PC-3 (cell line): ENCODE measurements at regions of chr12 and their contacts with region 1.

Region 1: DNA sequence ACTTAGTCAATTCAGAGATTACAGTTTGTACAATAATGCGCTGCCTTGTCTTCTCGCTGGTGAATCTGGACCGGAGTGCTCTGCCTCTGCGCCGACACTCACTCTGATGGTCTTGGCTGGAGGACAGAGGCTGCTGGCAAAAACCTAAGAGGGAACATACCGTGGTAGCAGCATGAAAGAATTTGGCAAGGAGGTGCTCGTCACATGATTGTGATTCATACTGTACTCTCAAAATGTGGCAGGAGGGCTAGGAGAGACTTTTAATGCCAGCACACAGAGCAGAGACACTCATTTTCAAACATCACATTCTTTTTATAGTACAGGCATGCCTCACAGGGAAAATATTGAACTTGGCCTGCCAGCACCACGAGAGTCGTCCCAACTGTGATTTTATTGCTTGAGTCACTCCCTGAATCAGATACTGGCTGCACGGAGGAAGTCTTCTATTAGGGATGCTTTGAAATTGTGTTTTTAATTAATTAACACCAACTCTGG is 67.8 kb downstream of the HMGA2 start:
- DNase-seq: peak; percentile 97
- ATAC-seq: peak; percentile 74
- H3K4me3 ChIP-seq: peak overlapping the region; percentile 36; the same call in 1 of the 2 replicates
- H3K27ac ChIP-seq: peak overlapping the region; percentile 95
- H3K4me1 ChIP-seq: peaks cover 81% of the 10 kb centered on the region
- H3K27me3 ChIP-seq: no peaks in the 10 kb centered on the region
- CTCF ChIP-seq: no peak

Region 2: GRCh38 chr12:65740873-65741600 is 151.0 kb before region 1 on chr12:
- CTCF ChIA-PET with region 1: no interaction called
- POLR2A ChIA-PET with region 1: no interaction called
- intact Hi-C with region 1: no loop called
- DNase-seq: peak; percentile 42
- ATAC-seq: peak; percentile 80
- H3K4me3 ChIP-seq: peak overlapping the region; percentile 34; the same call in 1 of the 2 replicates
- H3K27ac ChIP-seq: no peak overlapping the region
- H3K4me1 ChIP-seq: 0 out of 2 replicates have a peak, but pooled peaks cover 2% of the 10 kb centered on the region
- H3K27me3 ChIP-seq: no peaks in the 10 kb centered on the region
- CTCF ChIP-seq: no peak

Region 3: GRCh38 chr12:65948320-65949008 is 56.4 kb after region 1 on chr12:
- CTCF ChIA-PET with region 1: no interaction called
- POLR2A ChIA-PET with region 1: no interaction called
- intact Hi-C with region 1: loop called (anchors 1 kb)
- DNase-seq: peak; percentile 98
- ATAC-seq: peak; percentile 60
- H3K4me3 ChIP-seq: peak overlapping the region; percentile 11; the same call in 1 of the 2 replicates
- H3K27ac ChIP-seq: peak overlapping the region; percentile 98
- H3K4me1 ChIP-seq: peaks cover 86% of the 10 kb centered on the region
- H3K27me3 ChIP-seq: no peaks in the 10 kb centered on the region
- CTCF ChIP-seq: no peak

Region 4: GRCh38 chr12:65986047-65986446 is 94.0 kb after region 1 on chr12:
- CTCF ChIA-PET with region 1: no interaction called
- POLR2A ChIA-PET with region 1: no interaction called
- intact Hi-C with region 1: loop called (anchors 1 kb)
- DNase-seq: no peak
- ATAC-seq: no peak
- H3K4me3 ChIP-seq: no peak overlapping the region
- H3K27ac ChIP-seq: no peak overlapping the region
- H3K4me1 ChIP-seq: no peaks in the 10 kb centered on the region
- H3K27me3 ChIP-seq: no peaks in the 10 kb centered on the region
- CTCF ChIP-seq: no peak

Region 5: DNA sequence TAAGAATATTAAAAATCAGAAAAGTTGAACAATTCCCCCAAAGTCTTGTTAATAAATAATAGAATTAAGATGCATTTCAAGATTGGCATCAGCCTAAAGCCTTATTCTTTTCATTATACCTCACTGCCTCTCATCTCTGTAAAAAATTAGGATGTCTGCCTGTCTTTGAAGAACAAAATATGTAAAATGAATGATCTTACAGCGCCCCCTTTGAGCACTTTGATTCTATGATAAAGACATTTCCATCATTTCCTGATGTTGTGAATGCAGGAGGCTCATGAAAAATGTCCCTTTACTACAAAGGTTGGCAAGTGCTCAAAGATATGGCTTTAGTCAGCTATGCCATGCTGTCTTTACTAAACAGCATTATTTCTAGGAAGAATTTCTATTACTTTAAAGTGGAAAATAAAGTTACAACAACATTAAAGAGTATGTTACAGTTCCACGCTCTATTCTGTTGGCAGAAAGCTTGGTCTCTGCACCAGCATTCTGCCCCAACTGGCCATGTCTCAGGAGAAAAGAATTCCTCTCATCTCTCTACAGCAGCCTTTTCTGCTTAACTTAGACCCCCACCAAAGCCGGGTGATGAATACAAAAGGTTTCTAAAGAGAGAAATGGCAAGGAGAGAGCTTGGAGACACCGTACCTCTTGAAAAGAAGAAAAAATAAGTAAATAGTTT is 143.4 kb after region 1 on chr12:
- CTCF ChIA-PET with region 1: no interaction called
- POLR2A ChIA-PET with region 1: no interaction called
- intact Hi-C with region 1: loop called (anchors 5 kb)
- DNase-seq: peak; percentile 79
- ATAC-seq: peak; percentile 45; the same call in 1 of the 2 replicates
- H3K4me3 ChIP-seq: no peak overlapping the region
- H3K27ac ChIP-seq: 0 out of 2 replicates have a peak overlapping the region, but pooled peaks have one; percentile 6
- H3K4me1 ChIP-seq: peaks cover 19% of the 10 kb centered on the region
- H3K27me3 ChIP-seq: no peaks in the 10 kb centered on the region
- CTCF ChIP-seq: peak; percentile 79